ENCODE measurements at regions of chr4 and their contacts with region 1.

Region 1: DNA sequence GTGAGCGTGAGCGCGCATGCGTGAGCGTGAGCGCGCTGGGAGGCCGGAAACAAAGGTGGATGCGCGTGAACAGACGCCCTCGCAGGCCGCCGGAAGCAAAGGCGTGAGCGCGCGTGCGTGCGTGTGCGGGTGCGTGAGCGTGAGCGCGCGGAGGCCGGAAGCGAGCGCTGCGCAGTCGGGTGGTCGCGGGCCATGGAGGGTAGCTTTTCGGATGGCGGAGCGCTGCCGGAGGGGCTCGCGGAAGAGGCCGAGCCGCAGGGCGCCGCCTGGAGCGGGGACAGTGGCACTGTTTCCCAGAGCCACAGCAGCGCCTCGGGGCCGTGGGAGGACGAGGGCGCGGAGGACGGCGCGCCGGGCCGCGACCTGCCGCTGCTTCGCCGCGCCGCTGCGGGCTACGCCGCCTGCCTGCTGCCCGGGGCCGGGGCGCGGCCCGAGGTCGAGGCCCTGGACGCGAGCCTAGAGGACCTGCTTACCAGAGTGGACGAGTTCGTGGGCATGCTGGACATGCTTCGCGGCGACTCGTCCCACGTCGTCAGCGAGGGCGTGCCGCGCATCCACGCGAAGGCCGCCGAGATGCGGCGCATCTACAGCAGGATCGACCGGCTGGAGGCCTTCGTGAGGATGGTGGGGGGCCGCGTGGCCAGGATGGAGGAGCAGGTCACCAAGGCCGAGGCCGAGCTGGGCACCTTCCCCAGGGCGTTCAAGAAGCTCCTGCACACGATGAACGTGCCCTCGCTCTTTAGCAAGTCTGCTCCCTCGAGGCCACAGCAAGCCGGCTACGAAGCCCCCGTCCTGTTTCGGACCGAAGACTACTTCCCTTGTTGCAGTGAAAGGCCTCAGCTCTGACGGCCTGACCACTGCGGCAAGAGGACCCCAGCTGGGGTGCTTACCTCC is at the start of gene BLOC1S4:
- DNase-seq: peak; percentile 77 to 90 (median 87)
- H3K4me3 ChIP-seq: peak within 1 kb of the TSS; percentile 69 to 81 (median 76)
- H3K4me3 Mint-ChIP-seq: peak within 1 kb of the TSS; percentile 91 to 96
- H3K27ac ChIP-seq: peak within 1 kb of the TSS; percentile 70 to 87
- H3K27ac Mint-ChIP-seq: peak within 1 kb of the TSS; percentile 85 to 94 (median 89)
- H3K4me1 ChIP-seq: peaks cover 23 to 37% of the 10 kb centered on the region in 2 donors
- H3K4me1 Mint-ChIP-seq: peaks cover 26% of the 10 kb centered on the region
- H3K27me3 ChIP-seq: no peaks in the 10 kb centered on the region
- H3K27me3 Mint-ChIP-seq: peaks cover 2 to 8% (median 3%) of the 10 kb centered on the region in 3 donors
- CTCF ChIP-seq: peak; percentile 32
- polyA plus RNA-seq, gene BLOC1S4: 6.7 to 30.9 (median 20.1) TPM

Region 2: GRCh38 chr4:6783053-6783981 is 67.1 kb after region 1 on chr4:
- intact Hi-C with region 1: loop called in 1 of 2 experiments (anchors 5 kb)
- DNase-seq: peak; percentile 75 to 81 (median 79)
- H3K4me3 ChIP-seq: peak overlapping the region; percentile 75 to 98 (median 81)
- H3K4me3 Mint-ChIP-seq: peak overlapping the region; percentile 84 to 88
- H3K27ac ChIP-seq: peak overlapping the region; percentile 88 to 92
- H3K27ac Mint-ChIP-seq: peak overlapping the region; percentile 76 to 92 (median 91)
- H3K4me1 ChIP-seq: peaks cover 30 to 46% of the 10 kb centered on the region in 2 donors
- H3K4me1 Mint-ChIP-seq: peaks cover 58% of the 10 kb centered on the region
- H3K27me3 ChIP-seq: no peaks in the 10 kb centered on the region
- H3K27me3 Mint-ChIP-seq: peaks cover 0 to 4% (median 2%) of the 10 kb centered on the region in 3 donors
- CTCF ChIP-seq: no peak

Region 3: GRCh38 chr4:6986781-6987587 is 270.7 kb after region 1 on chr4:
- intact Hi-C with region 1: loop called in 1 of 2 experiments (anchors 5 kb)
- DNase-seq: peak; percentile 90 to 91 (median 90)
- H3K4me3 ChIP-seq: peak overlapping the region; percentile 57 to 80 (median 69)
- H3K4me3 Mint-ChIP-seq: peak overlapping the region; percentile 92 to 94
- H3K27ac ChIP-seq: peak overlapping the region; percentile 79 to 81
- H3K27ac Mint-ChIP-seq: peak overlapping the region; percentile 91 to 98 (median 97)
- H3K4me1 ChIP-seq: peaks cover 71 to 80% of the 10 kb centered on the region in 2 donors
- H3K4me1 Mint-ChIP-seq: peaks cover 81% of the 10 kb centered on the region
- H3K27me3 ChIP-seq: no peaks in the 10 kb centered on the region
- H3K27me3 Mint-ChIP-seq: peaks cover 0 to 3% (median 2%) of the 10 kb centered on the region in 3 donors
- CTCF ChIP-seq: no peak

Region 4: DNA sequence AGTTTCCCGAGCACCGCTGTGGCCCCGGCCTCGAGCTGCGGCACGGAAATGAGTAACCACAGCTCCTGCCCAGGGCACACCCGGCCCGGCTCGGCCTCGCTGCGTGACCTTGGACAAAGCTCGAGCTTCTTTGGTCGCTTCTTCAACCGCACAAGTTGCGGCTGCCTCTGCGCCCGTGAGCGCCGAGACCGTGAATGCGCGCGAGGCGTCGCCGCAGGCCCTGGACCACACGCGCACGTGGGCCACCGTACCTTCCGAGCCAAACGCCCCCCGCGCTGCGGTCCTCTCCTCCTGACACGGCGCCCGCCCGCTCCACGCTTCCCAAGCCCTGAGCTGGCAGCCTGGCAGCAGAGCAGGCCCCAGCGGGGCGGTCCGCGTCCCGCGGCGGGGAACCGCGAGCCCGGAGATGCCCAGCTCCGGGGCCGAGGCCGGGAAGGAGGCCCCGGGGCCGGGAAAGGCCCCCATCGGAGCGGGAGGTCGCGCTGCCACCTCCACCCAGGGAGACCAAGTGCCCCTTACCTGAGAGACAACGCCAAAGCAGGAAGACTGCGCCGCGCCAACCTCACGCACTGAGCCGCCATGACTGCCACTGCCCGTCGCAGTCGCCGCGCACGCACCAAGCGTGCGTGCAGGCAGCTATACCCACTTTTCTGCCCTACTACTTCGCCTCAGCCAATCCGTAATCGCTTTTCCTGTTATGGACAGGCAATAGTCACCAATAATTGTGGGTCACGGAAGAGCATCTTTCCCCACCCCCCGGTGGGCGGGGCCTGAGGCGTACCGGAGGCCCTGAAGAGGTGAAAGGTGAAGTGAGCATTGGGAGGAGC is 351.4 kb after region 1 on chr4 and contains the start of gene GRPEL1:
- intact Hi-C with region 1: loop called (anchors 2 to 5 kb)
- DNase-seq: peak; percentile 99 to 100 (median 100)
- H3K4me3 ChIP-seq: peak within 1 kb of the TSS; percentile 70 to 83 (median 79)
- H3K4me3 Mint-ChIP-seq: peak within 1 kb of the TSS; percentile 91 to 98
- H3K27ac ChIP-seq: peak within 1 kb of the TSS; percentile 83 to 94
- H3K27ac Mint-ChIP-seq: peak within 1 kb of the TSS; percentile 90 to 98 (median 96)
- H3K4me1 ChIP-seq: peaks cover 37 to 46% of the 10 kb centered on the region in 2 donors
- H3K4me1 Mint-ChIP-seq: peaks cover 39% of the 10 kb centered on the region
- H3K27me3 ChIP-seq: peaks cover 0 to 18% of the 10 kb centered on the region in 2 donors
- H3K27me3 Mint-ChIP-seq: peaks cover 12 to 24% (median 20%) of the 10 kb centered on the region in 3 donors
- CTCF ChIP-seq: no peak
- polyA plus RNA-seq, gene GRPEL1: 44.1 to 49.6 (median 45.4) TPM

Region 5: GRCh38 chr4:7192252-7193029 is 476.2 kb after region 1 on chr4 and contains the start of gene SORCS2:
- intact Hi-C with region 1: no loop called
- DNase-seq: no peak
- H3K4me3 ChIP-seq: no peak within 1 kb of the TSS
- H3K4me3 Mint-ChIP-seq: peak within 1 kb of the TSS in 1 of 2 donors; percentile 75
- H3K27ac ChIP-seq: no peak within 1 kb of the TSS
- H3K27ac Mint-ChIP-seq: no peak within 1 kb of the TSS
- H3K4me1 ChIP-seq: no peaks in the 10 kb centered on the region
- H3K4me1 Mint-ChIP-seq: no peaks in the 10 kb centered on the region
- H3K27me3 ChIP-seq: peaks cover 12 to 36% of the 10 kb centered on the region in 2 donors
- H3K27me3 Mint-ChIP-seq: peaks cover 37 to 67% (median 49%) of the 10 kb centered on the region in 3 donors
- CTCF ChIP-seq: peak; percentile 46
- polyA plus RNA-seq, gene SORCS2: 0.46 to 0.55 TPM in 2 of 3 donors, not detected in the other

Measured in CD14-positive monocyte (primary cell).